ENCODE measurements at regions of chr1 and their contacts with region 1.

Region 1: GRCh38 chr1:204207136-204207616 is 6.6 kb downstream of the GOLT1A start:
- DNase-seq: no peak
- H3K4me3 ChIP-seq: no peak overlapping the region
- H3K27ac ChIP-seq: no peak overlapping the region
- H3K27me3 ChIP-seq: no peaks in the 10 kb centered on the region
- CTCF ChIP-seq: peak; percentile 92

Region 2: DNA sequence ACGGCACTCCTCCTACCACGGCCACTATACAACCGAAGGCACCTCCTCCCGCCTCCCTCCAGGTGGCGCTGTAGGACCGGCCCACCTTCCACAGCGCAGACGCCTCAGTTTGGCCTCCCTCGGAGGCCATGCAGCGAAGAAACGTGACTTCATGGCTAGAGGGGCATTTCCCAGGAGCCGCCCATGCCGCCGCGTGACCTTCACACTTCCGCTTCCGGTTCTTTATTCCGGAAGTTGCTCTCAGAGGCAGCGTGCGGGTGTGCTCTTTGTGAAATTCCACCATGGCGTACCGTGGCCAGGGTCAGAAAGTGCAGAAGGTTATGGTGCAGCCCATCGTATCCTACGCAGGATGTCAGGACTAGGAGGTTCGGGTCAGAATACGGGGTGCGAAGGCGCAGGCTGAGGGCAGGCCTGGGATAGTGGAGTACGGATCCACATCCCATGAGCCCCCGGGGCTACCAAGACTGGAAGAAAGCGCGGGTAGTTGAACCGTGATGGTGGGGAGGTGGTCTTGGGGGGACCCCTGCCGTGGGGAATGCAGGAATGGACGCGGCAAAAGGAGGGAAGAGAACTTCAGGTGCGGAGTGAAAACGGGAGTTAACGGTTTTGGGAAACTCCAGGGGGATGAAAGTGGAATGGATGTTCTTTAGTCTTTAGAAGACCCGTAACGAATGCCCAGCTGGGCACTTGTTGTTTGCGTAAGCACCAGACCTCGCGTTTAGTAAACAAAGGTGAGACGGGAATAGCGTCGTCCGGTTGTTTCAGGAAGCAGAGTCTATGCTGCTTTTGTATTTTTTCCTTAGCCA is 345.6 kb before region 1 on chr1 and contains the start of gene SNRPE:
- CTCF ChIA-PET with region 1: interaction called, 14 read pairs
- POLR2A ChIA-PET with region 1: no interaction called
- DNase-seq: peak; percentile 97
- H3K4me3 ChIP-seq: peak within 1 kb of the TSS; percentile 98
- H3K27ac ChIP-seq: peak within 1 kb of the TSS; percentile 73
- H3K27me3 ChIP-seq: no peaks in the 10 kb centered on the region
- CTCF ChIP-seq: peak; percentile 95
- polyA plus RNA-seq, gene SNRPE: 227 and 278 TPM in 2 replicates

Region 3: GRCh38 chr1:204128964-204129896 is 77.9 kb before region 1 on chr1:
- CTCF ChIA-PET with region 1: interaction called, 11 read pairs
- POLR2A ChIA-PET with region 1: no interaction called
- DNase-seq: peak; percentile 32
- H3K4me3 ChIP-seq: no peak overlapping the region
- H3K27ac ChIP-seq: no peak overlapping the region
- H3K27me3 ChIP-seq: no peaks in the 10 kb centered on the region
- CTCF ChIP-seq: peak; percentile 85

Region 4: DNA sequence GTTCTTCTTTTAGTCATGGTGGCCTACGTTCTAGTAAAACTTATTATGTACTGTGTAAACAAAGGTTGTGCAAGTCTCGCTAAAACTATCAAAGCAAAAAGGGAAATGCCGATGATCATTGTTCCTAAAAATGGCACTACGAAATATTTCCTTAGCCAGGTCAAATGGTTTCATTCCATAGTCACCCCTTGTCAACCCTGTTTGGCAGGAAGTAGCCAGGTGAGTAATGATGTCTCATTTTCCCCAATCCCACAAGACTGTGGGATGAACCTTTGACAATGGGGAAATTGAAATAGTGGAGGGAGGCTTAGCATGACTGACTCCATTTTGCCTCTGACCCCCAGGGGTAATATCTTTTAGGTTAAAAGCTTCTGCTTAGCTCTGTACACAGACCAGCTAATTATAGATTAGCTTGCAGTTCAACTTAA is 35.4 kb before region 1 on chr1:
- CTCF ChIA-PET with region 1: interaction called, 190 read pairs
- POLR2A ChIA-PET with region 1: no interaction called
- DNase-seq: no peak
- H3K4me3 ChIP-seq: no peak overlapping the region
- H3K27ac ChIP-seq: no peak overlapping the region
- H3K27me3 ChIP-seq: no peaks in the 10 kb centered on the region
- CTCF ChIP-seq: no peak

Region 5: DNA sequence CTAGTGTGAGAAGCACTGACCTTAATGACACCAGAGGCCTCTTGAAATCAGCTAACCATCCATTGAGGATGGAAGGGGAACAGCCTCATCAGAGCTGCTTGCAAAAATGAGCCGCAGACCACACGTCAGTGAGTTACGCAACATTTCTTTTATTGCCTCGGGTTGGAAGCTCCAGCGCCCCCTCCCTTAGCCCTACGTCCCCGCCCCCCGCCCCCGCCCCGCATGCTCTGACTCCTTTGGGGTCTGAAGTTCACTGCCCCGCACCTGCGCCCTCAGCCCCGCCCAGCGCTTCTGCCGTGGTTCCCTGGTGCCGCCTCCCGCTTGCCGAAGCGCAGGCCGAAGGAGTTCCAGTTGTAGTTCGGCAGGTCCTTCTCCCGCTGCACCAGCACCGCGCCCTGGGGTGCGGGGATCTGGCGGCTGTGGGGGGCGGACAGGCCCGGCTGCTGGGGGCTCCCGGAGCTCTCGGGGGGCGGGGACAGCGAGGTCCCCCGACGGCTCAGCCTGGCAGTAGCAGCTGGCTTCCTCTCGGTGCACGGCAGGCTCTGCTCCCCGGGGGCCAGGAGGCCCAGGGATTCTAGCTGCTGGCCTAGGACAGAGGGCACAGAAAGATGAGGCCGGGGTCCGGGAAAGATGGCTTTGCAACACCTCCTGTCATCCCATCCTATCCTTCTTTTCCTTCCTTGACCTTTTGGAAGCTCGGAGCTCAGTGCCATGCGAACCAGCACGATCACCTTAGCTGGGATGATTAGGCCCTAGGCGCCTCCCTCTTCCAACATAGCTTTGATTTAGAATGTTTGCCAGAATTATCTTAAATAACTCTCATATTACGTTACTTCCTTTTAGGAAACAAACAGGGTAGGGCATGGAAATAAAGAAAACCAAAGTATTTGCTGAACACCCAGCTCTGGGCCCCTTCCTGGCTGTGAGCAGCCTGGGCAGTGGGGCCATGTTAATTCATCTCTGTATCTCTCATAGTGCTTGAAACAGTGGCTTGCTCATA is 16.7 kb before region 1 on chr1:
- CTCF ChIA-PET with region 1: interaction called, 47 read pairs
- POLR2A ChIA-PET with region 1: no interaction called
- DNase-seq: no peak
- H3K4me3 ChIP-seq: peak overlapping the region; percentile 17; the same call in 1 of the 2 replicates
- H3K27ac ChIP-seq: no peak overlapping the region
- H3K27me3 ChIP-seq: peaks cover 6% of the 10 kb centered on the region
- CTCF ChIP-seq: no peak

Region 6: DNA sequence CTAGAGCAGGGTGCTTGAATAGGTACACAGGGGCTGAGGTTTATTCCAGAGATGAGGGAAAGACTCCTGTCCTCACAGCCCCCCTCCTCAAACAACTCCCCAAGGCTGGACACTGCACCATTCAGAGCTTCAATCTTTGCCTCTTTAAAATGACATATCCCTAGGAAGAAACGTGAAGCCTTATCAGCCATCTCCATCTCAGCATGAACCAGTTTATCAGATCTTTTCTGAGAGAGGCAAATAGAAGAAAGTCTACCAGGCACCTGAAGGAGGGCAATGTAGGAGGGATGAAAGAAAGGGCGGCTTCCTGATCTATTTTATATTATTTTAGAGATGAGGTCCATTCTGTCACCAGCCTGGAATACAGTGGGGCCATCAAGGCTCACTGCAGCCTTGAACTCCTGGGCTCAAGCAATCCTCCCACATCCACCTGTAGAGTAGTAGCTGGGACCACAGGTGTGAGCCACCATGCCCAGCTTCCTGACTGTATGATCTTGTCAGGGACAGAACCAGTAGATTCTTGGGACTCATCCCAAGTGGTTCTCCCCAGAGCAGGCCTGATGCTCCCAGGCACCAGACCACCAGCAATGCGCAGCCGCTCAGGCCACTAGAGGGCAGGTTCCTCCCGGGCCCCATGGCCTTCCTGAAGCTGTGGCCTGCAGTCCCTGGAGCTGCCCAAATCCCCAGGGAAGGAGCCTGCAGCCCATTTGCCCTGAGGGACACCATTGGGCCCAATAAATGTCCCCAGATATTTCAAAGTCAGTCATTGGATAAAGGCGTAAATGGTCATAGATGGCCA is 51.0 kb after region 1 on chr1:
- CTCF ChIA-PET with region 1: interaction called, 13 read pairs
- POLR2A ChIA-PET with region 1: no interaction called
- DNase-seq: peak; percentile 20
- H3K4me3 ChIP-seq: no peak overlapping the region
- H3K27ac ChIP-seq: no peak overlapping the region
- H3K27me3 ChIP-seq: no peaks in the 10 kb centered on the region
- CTCF ChIP-seq: peak; percentile 89

Region 7: GRCh38 chr1:204292371-204293139 is 85.4 kb after region 1 on chr1:
- CTCF ChIA-PET with region 1: no interaction called
- POLR2A ChIA-PET with region 1: no interaction called
- DNase-seq: no peak
- H3K4me3 ChIP-seq: no peak overlapping the region
- H3K27ac ChIP-seq: no peak overlapping the region
- H3K27me3 ChIP-seq: no peaks in the 10 kb centered on the region
- CTCF ChIP-seq: no peak